ENCODE measurements at regions of chr11 and their contacts with region 1.

Region 1: DNA sequence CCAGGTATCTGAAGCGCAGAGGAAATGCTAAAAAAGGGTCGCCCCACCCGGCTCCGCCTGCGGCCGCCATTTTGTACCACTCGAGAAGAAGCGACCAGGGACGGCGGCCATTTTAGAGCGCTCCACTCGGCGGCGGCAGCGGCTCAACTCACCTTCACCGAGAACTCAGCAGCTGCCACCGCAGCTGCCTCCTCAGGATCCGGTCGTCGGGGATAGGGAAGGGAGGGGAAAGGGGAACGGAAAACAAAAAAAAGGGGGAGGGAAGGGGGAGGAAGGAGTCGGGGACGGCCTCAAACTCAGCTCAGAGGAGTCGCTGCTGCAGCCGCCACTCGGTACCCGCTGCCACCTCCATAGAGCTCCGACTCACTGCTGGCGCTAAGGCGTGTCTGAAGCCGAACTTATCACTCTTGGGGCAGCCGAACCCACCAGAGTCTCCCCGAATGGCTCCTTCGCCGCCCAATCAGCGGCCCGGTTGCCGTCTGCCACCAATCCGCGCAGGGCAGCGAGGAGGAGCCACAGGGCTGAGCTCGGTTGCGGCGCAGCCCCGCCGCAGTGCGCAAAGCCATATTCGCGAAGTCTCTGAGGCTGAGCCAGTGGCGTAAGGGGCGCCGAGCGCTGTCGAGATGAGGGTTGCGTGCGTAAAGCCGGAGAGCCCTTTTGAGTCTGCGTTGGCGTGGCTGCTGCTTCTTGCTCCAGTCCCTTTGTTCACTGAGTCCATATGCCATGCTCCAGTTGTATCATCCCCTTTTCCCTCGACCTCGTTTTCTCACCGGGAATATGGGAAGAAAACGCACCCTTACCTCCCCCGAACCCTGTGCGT is at the start of gene EIF4G2:
- DNase-seq: peak; percentile 98
- H3K4me3 Mint-ChIP-seq: peak within 1 kb of the TSS; percentile 89
- H3K27ac Mint-ChIP-seq: peak within 1 kb of the TSS; percentile 97
- H3K4me1 Mint-ChIP-seq: peaks cover 4% of the 10 kb centered on the region
- H3K27me3 Mint-ChIP-seq: no peaks in the 10 kb centered on the region
- CTCF ChIP-seq: no peak
- total RNA-seq, gene EIF4G2: 573 and 817 TPM in 2 replicates

Region 2: DNA sequence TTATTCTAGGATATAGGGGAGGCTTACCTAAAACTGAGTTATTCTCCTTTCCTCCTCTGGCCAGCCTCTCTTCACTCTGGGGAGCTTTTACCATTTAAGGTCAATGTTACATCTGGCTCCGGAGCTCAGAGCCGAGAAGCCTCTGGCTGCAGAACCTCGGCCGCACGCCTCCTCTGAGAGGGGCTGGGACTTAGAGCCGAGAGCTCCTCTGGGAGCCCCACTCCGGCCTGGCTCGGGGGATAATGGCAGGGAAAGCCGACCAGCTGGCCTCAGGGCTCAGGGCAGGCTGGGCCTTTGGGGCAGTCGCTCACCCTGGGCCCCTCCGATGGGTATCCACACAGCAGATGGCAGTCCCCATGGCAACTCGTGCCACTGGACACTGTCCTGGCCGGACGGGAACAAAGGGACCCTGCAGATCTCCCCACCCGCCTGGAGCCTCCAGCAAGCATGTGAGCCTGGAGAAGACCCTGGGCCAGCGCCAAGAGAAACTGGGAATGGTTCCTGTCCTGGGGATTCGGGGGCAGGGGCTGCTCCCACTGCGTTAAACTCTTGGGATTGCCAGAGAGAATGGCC is 115.2 kb before region 1 on chr11 and contains the start of gene IRAG1:
- CTCF ChIA-PET with region 1: no interaction called
- POLR2A ChIA-PET with region 1: no interaction called
- intact Hi-C with region 1: no loop called
- DNase-seq: no peak
- H3K4me3 Mint-ChIP-seq: no peak within 1 kb of the TSS
- H3K27ac Mint-ChIP-seq: no peak within 1 kb of the TSS
- H3K4me1 Mint-ChIP-seq: no peaks in the 10 kb centered on the region
- H3K27me3 Mint-ChIP-seq: peaks cover 25% of the 10 kb centered on the region
- CTCF ChIP-seq: no peak
- total RNA-seq, gene IRAG1: 0.07 TPM in 1 of 2 replicates, not detected in the other

Region 3: DNA sequence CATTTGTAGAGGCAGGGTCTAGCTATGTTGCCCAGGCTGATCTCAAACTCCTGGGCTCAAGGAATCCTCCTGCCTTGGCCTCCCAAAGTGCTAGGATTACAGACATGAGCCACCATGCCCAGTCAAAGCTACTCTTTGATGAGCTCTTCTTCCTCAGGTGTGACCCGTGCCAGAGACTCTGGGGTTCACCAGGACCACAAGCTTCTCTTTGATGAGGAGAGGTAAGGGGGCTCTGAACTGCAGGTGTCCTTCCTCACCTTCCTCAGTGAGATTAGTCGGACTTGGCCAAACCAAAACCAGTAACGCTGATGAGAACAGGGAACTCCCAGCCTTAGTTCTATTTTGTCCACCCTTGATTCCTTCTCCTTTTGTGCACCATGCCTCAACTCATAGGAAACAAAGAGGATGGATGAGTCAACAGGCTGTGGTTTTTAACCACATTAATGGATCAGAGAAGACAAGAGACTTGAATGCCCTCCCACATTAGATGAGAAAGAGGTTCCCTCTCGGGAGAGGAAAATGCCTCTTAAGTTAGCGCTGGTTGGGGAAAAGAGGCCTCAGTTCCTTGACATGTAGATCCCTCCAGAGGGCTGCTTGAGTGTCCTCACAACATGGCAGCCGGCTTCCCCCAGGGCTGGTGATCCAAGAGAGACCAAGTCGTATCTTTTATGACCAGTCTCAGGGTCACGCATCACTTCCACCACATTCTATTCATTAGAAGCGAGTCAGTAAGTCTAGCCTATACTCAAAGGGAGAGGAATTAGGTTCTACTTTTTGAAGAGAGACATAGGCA is 83.5 kb before region 1 on chr11:
- CTCF ChIA-PET with region 1: no interaction called
- POLR2A ChIA-PET with region 1: no interaction called
- intact Hi-C with region 1: no loop called
- DNase-seq: peak; percentile 66
- H3K4me3 Mint-ChIP-seq: no peak overlapping the region
- H3K27ac Mint-ChIP-seq: no peak overlapping the region
- H3K4me1 Mint-ChIP-seq: no peaks in the 10 kb centered on the region
- H3K27me3 Mint-ChIP-seq: peaks cover 17% of the 10 kb centered on the region
- CTCF ChIP-seq: no peak

Region 4: GRCh38 chr11:10792398-10792975 is 16.3 kb before region 1 on chr11:
- CTCF ChIA-PET with region 1: interaction called, 31 read pairs
- POLR2A ChIA-PET with region 1: interaction called, 60 read pairs
- intact Hi-C with region 1: no loop called
- DNase-seq: peak; percentile 88
- H3K4me3 Mint-ChIP-seq: no peak overlapping the region
- H3K27ac Mint-ChIP-seq: no peak overlapping the region
- H3K4me1 Mint-ChIP-seq: peaks cover 8% of the 10 kb centered on the region
- H3K27me3 Mint-ChIP-seq: no peaks in the 10 kb centered on the region
- CTCF ChIP-seq: peak; percentile 96

Region 5: DNA sequence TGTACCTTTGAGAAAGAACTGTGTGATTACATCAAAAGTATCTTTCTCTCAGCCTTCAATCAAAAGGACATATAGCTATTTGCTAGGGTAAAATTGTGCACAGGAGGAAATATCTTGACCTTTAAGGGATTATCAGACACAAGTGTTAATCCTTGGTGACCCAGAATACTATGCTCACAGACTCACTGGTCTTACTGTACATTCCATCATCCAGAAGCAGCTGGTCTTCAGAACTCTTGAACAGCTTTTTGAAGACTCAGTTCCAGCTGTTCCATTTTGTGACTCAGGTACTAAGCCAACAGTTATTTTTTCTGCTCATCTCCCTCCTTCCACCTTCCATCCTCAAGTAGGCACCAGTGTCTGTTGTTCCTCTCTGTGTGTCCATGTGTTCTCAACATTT is 29.3 kb after region 1 on chr11:
- CTCF ChIA-PET with region 1: interaction called, 4 read pairs
- POLR2A ChIA-PET with region 1: interaction called, 31 read pairs
- intact Hi-C with region 1: no loop called
- DNase-seq: no peak
- H3K4me3 Mint-ChIP-seq: no peak overlapping the region
- H3K27ac Mint-ChIP-seq: no peak overlapping the region
- H3K4me1 Mint-ChIP-seq: no peaks in the 10 kb centered on the region
- H3K27me3 Mint-ChIP-seq: no peaks in the 10 kb centered on the region
- CTCF ChIP-seq: no peak

Region 6: GRCh38 chr11:10866893-10867331 is 58.1 kb after region 1 on chr11:
- CTCF ChIA-PET with region 1: no interaction called
- POLR2A ChIA-PET with region 1: interaction called, 12 read pairs
- intact Hi-C with region 1: no loop called
- DNase-seq: no peak
- H3K4me3 Mint-ChIP-seq: no peak overlapping the region
- H3K27ac Mint-ChIP-seq: no peak overlapping the region
- H3K4me1 Mint-ChIP-seq: no peaks in the 10 kb centered on the region
- H3K27me3 Mint-ChIP-seq: no peaks in the 10 kb centered on the region
- CTCF ChIP-seq: no peak

Region 7: DNA sequence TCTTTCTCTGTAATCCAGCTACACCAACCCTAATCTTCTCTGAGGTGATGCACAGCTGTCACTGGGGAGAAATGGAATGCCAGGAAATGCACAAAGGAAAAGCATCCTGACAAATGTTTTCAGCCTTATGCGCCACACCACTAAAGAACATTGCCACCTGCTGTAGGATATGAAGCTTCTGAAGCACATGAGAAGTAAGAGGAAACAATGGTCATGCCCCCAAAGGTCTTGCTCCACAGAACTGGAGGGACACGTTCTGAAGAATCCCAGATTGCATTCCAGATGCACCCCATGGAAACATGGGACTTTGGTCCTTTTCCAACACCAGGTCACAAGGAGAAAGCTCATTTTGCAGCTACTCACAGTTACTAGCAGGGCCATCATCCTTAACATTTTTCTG is 97.8 kb after region 1 on chr11:
- CTCF ChIA-PET with region 1: interaction called, 3 read pairs
- POLR2A ChIA-PET with region 1: interaction called, 147 read pairs
- intact Hi-C with region 1: no loop called
- DNase-seq: peak; percentile 30
- H3K4me3 Mint-ChIP-seq: no peak overlapping the region
- H3K27ac Mint-ChIP-seq: no peak overlapping the region
- H3K4me1 Mint-ChIP-seq: peaks cover 32% of the 10 kb centered on the region
- H3K27me3 Mint-ChIP-seq: no peaks in the 10 kb centered on the region
- CTCF ChIP-seq: peak; percentile 8

Region 8: DNA sequence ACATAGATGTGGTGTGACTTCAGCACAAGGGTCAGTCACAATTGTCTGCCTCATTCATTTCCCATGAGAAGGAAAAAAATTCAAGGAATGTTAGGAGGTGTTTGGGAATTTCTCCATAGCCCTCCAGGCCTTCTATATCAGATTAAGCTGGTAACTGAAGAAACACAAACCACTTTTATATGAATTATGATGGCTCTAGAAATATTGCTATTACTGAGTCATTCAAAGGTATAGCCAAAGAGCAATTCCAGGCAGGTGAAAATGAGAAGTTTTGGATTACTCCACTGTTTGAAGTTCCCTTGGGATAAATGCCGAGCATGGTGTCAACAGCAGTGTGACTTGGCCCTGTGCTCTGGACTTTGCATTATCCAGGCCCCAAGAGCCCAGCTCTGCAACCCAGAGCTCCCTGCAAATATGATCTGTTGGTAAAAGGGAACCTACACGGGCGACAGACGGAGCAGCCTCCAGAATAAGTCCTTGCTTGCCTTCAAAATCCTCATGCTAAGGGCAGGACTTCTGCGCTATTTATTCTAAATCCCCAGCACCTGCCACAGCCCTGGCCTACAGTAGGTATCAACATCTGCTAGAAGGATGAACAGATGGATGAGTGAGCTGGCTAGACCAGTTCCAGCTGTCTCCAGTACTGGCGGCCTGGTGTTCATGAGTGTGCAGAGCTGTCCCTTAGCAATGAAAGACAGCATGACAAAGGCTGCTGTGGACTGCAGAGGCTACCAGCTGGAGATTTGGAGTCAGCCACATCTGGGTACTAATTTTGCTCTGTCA is 116.6 kb after region 1 on chr11:
- CTCF ChIA-PET with region 1: interaction called, 3 read pairs
- POLR2A ChIA-PET with region 1: interaction called, 40 read pairs
- intact Hi-C with region 1: loop called (anchors 2 kb)
- DNase-seq: no peak
- H3K4me3 Mint-ChIP-seq: no peak overlapping the region
- H3K27ac Mint-ChIP-seq: no peak overlapping the region
- H3K4me1 Mint-ChIP-seq: no peaks in the 10 kb centered on the region
- H3K27me3 Mint-ChIP-seq: no peaks in the 10 kb centered on the region
- CTCF ChIP-seq: no peak

Region 9: DNA sequence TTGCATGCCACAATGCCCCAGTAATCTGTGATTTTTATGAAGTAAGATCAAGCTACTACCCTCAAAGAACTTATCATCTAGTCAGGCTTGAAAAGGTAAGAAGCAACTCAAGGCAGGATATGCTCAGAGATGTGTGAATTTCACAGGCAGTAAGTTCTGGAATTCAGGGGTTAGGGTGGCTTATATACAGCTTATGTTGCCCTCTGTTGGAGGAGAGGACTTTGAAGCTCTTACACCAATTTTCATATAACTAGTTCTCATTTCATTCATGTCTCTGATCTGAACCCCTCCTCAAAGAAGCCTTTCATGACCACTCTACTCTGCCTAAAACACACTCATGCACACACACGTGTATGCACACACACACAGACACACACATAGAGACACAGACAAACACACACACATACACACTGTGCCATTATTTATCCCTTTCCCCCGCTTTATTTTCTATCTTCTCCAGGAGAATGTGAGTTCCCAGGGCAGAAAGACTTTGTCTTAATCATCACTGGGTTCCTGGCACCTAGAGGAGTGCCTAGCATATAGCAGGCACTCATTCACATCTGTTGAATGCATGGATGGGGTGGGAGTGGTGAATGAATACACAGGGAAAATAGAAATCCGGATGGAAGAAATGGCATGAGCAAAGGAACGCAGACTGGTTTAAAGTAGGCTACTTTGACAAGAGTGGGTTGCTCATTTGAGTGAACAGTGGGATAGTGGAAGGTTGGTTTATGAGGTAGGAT is 269.8 kb after region 1 on chr11:
- CTCF ChIA-PET with region 1: no interaction called
- POLR2A ChIA-PET with region 1: no interaction called
- intact Hi-C with region 1: no loop called
- DNase-seq: peak; percentile 13
- H3K4me3 Mint-ChIP-seq: no peak overlapping the region
- H3K27ac Mint-ChIP-seq: no peak overlapping the region
- H3K4me1 Mint-ChIP-seq: peaks cover 5% of the 10 kb centered on the region
- H3K27me3 Mint-ChIP-seq: peaks cover 75% of the 10 kb centered on the region
- CTCF ChIP-seq: no peak

Region 10: GRCh38 chr11:11841723-11842420 is 1033.1 kb after region 1 on chr11 and contains the start of gene USP47:
- CTCF ChIA-PET with region 1: interaction called, 3 read pairs
- POLR2A ChIA-PET with region 1: interaction called, 12 read pairs
- intact Hi-C with region 1: no loop called
- DNase-seq: peak; percentile 87
- H3K4me3 Mint-ChIP-seq: no peak within 1 kb of the TSS
- H3K27ac Mint-ChIP-seq: no peak within 1 kb of the TSS
- H3K4me1 Mint-ChIP-seq: no peaks in the 10 kb centered on the region
- H3K27me3 Mint-ChIP-seq: no peaks in the 10 kb centered on the region
- CTCF ChIP-seq: peak; percentile 58
- total RNA-seq, gene USP47: 41.6 and 46.1 TPM in 2 replicates

Measured in MCF 10A (cell line).